ENCODE measurements at regions of chr15 and their contacts with region 1.

Region 1: DNA sequence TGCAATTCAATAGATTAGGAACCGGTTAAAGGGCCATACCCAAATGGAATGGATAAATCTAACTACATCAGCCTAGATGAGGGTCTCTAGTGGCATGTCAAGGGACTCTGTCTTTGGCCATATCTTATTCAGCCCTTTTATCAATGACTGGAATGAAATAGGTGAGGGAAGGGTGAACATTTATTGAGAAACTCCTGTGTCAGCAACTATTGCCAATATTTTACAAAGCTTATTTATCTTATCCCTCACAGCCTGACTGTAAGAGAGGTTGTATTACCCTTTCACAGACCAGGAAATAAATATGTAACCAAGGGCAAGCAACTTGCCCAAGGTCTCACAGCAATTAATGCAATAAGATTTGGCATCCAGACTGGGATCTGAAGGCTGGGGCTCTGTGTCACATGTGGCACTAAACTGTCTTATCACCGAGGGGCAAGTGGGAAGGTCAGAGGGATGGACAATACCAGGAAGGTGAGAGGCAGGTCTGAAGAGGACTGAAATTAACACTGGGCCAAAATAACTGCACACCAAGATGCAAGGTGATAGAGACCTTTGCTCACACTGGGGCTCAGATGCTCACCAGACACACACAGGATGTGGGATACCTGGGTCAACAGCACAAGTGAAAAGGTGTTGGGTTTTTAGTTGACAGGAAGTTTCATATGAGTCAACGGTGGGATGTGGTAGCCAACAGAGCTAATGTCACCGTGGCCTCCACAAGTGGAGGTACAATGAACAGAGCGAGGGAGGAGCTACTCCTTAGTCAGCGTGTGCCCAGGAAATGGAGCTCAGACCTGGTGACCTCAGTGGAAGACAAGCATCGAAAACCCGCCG is 261.3 kb downstream of the RPLP1 start:
- DNase-seq: peak; percentile 89
- H3K4me3 Mint-ChIP-seq: peak overlapping the region; percentile 5
- H3K27ac Mint-ChIP-seq: peak overlapping the region; percentile 72
- H3K4me1 Mint-ChIP-seq: peaks cover 61% of the 10 kb centered on the region
- H3K27me3 Mint-ChIP-seq: peaks cover 3% of the 10 kb centered on the region

Region 2: GRCh38 chr15:68820295-68821189 is 893.4 kb before region 1 on chr15 and contains the start of gene ANP32A:
- CTCF ChIA-PET with region 1: no interaction called
- POLR2A ChIA-PET with region 1: no interaction called
- intact Hi-C with region 1: loop called (anchors 10 kb)
- DNase-seq: peak; percentile 96
- H3K4me3 Mint-ChIP-seq: peak within 1 kb of the TSS; percentile 99
- H3K27ac Mint-ChIP-seq: peak within 1 kb of the TSS; percentile 99
- H3K4me1 Mint-ChIP-seq: peaks cover 31% of the 10 kb centered on the region
- H3K27me3 Mint-ChIP-seq: no peaks in the 10 kb centered on the region
- total RNA-seq, gene ANP32A: 190 to 204 TPM

Region 3: GRCh38 chr15:69679623-69680228 is 34.2 kb before region 1 on chr15:
- CTCF ChIA-PET with region 1: no interaction called
- POLR2A ChIA-PET with region 1: interaction called, 5 read pairs
- intact Hi-C with region 1: loop called (anchors 1 kb)
- DNase-seq: peak; percentile 86
- H3K4me3 Mint-ChIP-seq: peak overlapping the region; percentile 34
- H3K27ac Mint-ChIP-seq: peak overlapping the region; percentile 28
- H3K4me1 Mint-ChIP-seq: peaks cover 23% of the 10 kb centered on the region
- H3K27me3 Mint-ChIP-seq: peaks cover 9% of the 10 kb centered on the region

Region 4: GRCh38 chr15:69760890-69761568 is 47.1 kb after region 1 on chr15:
- CTCF ChIA-PET with region 1: interaction called, 4 read pairs
- POLR2A ChIA-PET with region 1: interaction called, 11 read pairs
- intact Hi-C with region 1: loop called (anchors 1 kb)
- DNase-seq: peak; percentile 93
- H3K4me3 Mint-ChIP-seq: peak overlapping the region; percentile 41
- H3K27ac Mint-ChIP-seq: peak overlapping the region; percentile 89
- H3K4me1 Mint-ChIP-seq: peaks cover 73% of the 10 kb centered on the region
- H3K27me3 Mint-ChIP-seq: peaks cover 3% of the 10 kb centered on the region

Region 5: DNA sequence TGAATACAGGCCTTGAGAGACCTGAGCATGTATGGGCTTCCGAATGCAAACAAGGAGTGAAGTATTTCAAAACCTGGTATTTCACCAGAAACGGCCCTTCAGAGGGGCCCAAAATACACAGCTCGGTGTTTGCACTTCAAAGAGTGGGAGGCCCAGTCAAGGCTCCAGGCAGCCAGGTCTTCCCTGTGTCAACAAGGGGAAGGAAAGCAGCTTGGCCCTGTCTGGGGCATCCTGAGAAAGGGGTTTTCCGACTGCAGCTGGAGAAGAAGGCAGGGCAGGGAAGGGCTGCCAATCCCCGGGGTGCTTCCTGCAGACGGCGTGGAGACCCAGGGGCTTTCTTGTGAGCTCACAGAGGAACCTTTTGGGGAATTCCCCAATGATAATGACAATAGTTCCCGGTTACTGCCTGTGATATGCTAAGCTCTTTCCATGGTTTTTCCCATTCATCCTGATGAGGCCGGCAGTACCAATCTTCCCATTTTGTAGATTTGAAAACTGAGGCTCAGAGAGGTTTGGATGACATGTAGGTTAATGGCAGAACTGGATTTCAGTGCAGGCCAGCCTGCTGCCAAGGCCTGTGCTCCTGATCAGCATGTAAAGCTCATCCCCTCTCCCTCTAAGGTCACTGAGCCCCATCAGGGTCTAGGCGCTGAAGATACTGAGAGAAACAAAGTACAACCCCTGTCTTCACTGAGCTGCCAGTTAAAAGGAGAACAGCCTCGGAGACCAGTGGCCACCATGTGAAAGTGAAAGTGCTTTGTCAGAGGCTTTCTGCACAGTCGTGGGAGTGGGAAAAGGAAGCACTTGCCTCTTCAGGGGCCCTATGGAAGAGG is 426.8 kb after region 1 on chr15:
- CTCF ChIA-PET with region 1: no interaction called
- POLR2A ChIA-PET with region 1: no interaction called
- intact Hi-C with region 1: loop called (anchors 5 kb)
- DNase-seq: peak; percentile 61
- H3K4me3 Mint-ChIP-seq: peak overlapping the region; percentile 7
- H3K27ac Mint-ChIP-seq: peak overlapping the region; percentile 38
- H3K4me1 Mint-ChIP-seq: peaks cover 34% of the 10 kb centered on the region
- H3K27me3 Mint-ChIP-seq: peaks cover 15% of the 10 kb centered on the region

Region 6: DNA sequence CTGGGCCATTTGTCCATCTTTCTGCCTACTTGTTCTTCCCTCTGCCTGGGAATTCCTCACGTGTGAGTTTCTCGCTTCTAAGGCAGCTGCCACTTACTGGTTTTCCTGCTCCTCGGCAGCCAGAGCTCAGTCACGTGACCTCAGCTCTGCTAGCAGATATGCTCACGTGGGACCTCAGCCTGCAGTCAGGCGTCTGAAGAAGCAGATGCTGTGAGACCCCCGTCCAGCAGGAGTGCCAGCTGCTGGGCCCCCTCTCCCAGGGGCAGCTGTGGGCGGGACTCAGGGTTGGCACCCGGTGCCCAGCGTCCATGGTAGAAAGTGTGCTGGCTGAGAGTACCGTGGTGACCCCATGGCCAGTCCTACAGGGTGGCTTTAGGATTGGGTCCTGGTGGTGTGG is 545.1 kb after region 1 on chr15:
- CTCF ChIA-PET with region 1: no interaction called
- POLR2A ChIA-PET with region 1: no interaction called
- intact Hi-C with region 1: loop called (anchors 10 kb)
- DNase-seq: no peak
- H3K4me3 Mint-ChIP-seq: peak overlapping the region; percentile 48
- H3K27ac Mint-ChIP-seq: peak overlapping the region; percentile 63
- H3K4me1 Mint-ChIP-seq: peaks cover 40% of the 10 kb centered on the region
- H3K27me3 Mint-ChIP-seq: peaks cover 1% of the 10 kb centered on the region

Measured in activated CD4-positive, alpha-beta memory T cell treated with anti-CD3 and anti-CD28 coated beads for 36 hours (primary cell).